HEK293T (cell line): ENCODE measurements at regions of chr5 and their contacts with region 1.

Region 1: GRCh38 chr5:160439205-160439600 is 17.5 kb downstream of the PTTG1 start:
- DNase-seq: peak; percentile 83

Region 2: GRCh38 chr5:160467555-160468362 is 28.6 kb after region 1 on chr5:
- CTCF ChIA-PET with region 1: interaction called, 12 read pairs
- POLR2A ChIA-PET with region 1: no interaction called
- DNase-seq: no peak

Region 3: GRCh38 chr5:160516696-160517510 is 77.7 kb after region 1 on chr5:
- CTCF ChIA-PET with region 1: no interaction called
- POLR2A ChIA-PET with region 1: no interaction called
- DNase-seq: no peak